Caco-2 (cell line): ENCODE measurements at regions of chr12 and their contacts with region 1.

Region 1: GRCh38 chr12:100229058-100229637 is 28.5 kb downstream of the ACTR6 start:
- DNase-seq: peak; percentile 51 to 63
- H3K4me3 ChIP-seq: no peak overlapping the region
- H3K4me3 Mint-ChIP-seq: no peak overlapping the region
- H3K27ac Mint-ChIP-seq: peak overlapping the region; percentile 79
- H3K4me1 ChIP-seq: peaks cover 11% of the 10 kb centered on the region
- H3K4me1 Mint-ChIP-seq: peaks cover 16% of the 10 kb centered on the region
- H3K27me3 ChIP-seq: no peaks in the 10 kb centered on the region
- H3K27me3 Mint-ChIP-seq: no peaks in the 10 kb centered on the region
- CTCF ChIP-seq: peak in 1 of 2 experiments; percentile 42

Region 2: DNA sequence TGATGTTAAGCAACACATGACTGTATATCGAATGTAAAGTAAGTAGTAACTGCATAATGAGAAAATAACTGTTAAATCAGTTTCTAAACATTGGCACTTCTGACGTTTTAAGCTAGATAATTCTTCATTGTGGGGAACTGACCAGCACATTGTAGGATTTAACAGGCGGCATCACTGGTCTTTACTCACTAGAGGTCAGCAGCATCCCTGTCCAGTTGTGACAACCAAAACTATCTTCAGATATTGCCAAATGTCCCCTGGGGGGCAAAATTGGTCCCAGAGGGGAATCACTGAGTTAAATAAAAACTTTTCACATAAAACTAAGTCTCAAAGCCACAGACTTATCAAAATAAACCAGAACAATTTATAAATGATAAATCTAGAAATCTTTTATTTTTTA is 151.8 kb before region 1 on chr12:
- CTCF ChIA-PET with region 1: interaction called, 5 read pairs
- POLR2A ChIA-PET with region 1: no interaction called
- intact Hi-C with region 1: loop called (anchors 1 kb)
- DNase-seq: peak in 1 of 2 experiments; percentile 11
- H3K4me3 ChIP-seq: no peak overlapping the region
- H3K4me3 Mint-ChIP-seq: no peak overlapping the region
- H3K27ac Mint-ChIP-seq: no peak overlapping the region
- H3K4me1 ChIP-seq: no peaks in the 10 kb centered on the region
- H3K4me1 Mint-ChIP-seq: no peaks in the 10 kb centered on the region
- H3K27me3 ChIP-seq: no peaks in the 10 kb centered on the region
- H3K27me3 Mint-ChIP-seq: no peaks in the 10 kb centered on the region
- CTCF ChIP-seq: peak in 1 of 2 experiments; percentile 19

Region 3: GRCh38 chr12:100142851-100143559 is 86.1 kb before region 1 on chr12 and contains the start of gene BLTP3B:
- CTCF ChIA-PET with region 1: interaction called, 10 read pairs
- POLR2A ChIA-PET with region 1: no interaction called
- intact Hi-C with region 1: loop called (anchors 1 kb)
- DNase-seq: peak; percentile 87 to 89
- H3K4me3 ChIP-seq: peak within 1 kb of the TSS; percentile 99
- H3K4me3 Mint-ChIP-seq: peak within 1 kb of the TSS; percentile 72
- H3K27ac Mint-ChIP-seq: peak within 1 kb of the TSS; percentile 86
- H3K4me1 ChIP-seq: no peaks in the 10 kb centered on the region
- H3K4me1 Mint-ChIP-seq: peaks cover 23% of the 10 kb centered on the region
- H3K27me3 ChIP-seq: no peaks in the 10 kb centered on the region
- H3K27me3 Mint-ChIP-seq: no peaks in the 10 kb centered on the region
- CTCF ChIP-seq: no peak
- total RNA-seq, gene BLTP3B: 26.6 and 29.6 TPM in 2 replicates

Region 4: DNA sequence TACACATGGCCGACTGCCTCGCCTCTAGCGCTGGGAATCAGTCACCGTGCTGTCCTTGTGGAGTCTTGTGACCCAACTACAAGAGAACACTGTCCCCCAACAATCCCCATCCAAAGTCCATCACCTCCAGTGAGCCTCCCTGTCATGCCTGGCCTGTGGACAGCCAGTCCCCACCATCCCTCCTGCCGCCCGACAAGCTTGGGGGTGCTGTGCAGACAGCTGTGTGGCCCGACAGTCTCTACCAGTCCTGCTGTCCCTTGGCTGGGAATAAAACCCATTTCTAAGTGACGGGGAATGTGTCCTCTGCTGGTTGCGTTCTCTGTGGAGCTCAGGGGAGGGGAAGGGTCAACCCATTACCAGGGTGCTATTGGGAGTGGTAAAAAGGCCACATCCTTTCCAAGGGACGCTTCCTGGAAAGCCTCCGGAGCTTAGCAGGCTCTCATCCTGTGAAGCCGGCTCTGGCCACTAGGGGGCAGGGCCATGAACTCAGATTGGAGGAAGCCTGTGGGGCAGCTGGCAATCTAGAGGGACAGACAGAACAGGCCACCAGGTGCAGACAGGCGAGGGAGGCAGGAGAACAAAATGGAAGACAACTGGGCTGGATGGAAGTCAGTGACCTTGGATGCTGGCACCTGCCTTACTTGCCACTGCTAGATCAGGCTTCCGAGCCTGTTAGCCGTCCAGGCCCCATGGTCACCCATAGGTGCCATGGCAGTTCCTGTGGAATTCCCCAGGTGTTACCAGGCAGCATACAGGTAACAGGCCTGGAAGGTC is 74.5 kb before region 1 on chr12:
- CTCF ChIA-PET with region 1: interaction called, 14 read pairs
- POLR2A ChIA-PET with region 1: no interaction called
- intact Hi-C with region 1: loop called (anchors 1 kb)
- DNase-seq: peak; percentile 70 to 75
- H3K4me3 ChIP-seq: no peak overlapping the region
- H3K4me3 Mint-ChIP-seq: no peak overlapping the region
- H3K27ac Mint-ChIP-seq: peak overlapping the region; percentile 53
- H3K4me1 ChIP-seq: no peaks in the 10 kb centered on the region
- H3K4me1 Mint-ChIP-seq: peaks cover 6% of the 10 kb centered on the region
- H3K27me3 ChIP-seq: no peaks in the 10 kb centered on the region
- H3K27me3 Mint-ChIP-seq: no peaks in the 10 kb centered on the region
- CTCF ChIP-seq: peak; percentile 66 to 74

Region 5: DNA sequence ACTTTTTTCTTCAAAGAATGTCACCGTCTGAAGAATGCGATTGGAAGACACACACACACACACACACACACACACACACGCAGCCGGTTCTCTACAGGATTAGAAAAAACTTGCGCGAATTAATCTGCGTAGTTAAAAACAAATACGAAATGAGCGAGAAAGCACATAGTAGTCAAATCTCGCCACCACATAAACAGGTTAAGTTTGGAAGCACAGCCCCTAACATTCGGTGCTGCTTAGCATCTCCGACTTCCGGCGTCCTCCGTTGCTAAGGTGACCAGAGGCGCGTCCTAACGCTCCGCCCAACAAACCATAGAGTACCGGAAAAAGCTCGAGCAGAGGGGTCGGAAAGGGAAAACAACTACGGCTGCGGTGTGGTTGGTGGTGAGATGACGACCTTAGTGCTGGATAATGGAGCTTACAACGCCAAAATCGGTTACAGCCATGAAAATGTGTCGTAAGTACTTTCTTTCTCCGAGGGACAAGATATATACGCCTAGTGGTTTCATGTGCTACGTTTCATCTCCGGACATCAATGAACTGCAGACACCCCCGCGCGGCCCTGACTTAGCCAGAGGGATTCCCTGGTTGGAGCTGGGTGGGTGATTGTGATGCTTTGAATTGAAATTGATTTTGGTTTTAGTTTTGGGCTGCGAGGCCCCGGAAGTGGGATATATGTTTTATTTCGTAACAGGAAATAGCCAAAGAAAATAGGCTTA is 28.5 kb before region 1 on chr12 and contains the start of gene ACTR6:
- CTCF ChIA-PET with region 1: interaction called, 6 read pairs
- POLR2A ChIA-PET with region 1: interaction called, 4 read pairs
- intact Hi-C with region 1: loop called (anchors 1 kb)
- DNase-seq: peak; percentile 94
- H3K4me3 ChIP-seq: peak within 1 kb of the TSS; percentile 65
- H3K4me3 Mint-ChIP-seq: peak within 1 kb of the TSS; percentile 88
- H3K27ac Mint-ChIP-seq: peak within 1 kb of the TSS; percentile 48
- H3K4me1 ChIP-seq: peaks cover 7% of the 10 kb centered on the region
- H3K4me1 Mint-ChIP-seq: no peaks in the 10 kb centered on the region
- H3K27me3 ChIP-seq: no peaks in the 10 kb centered on the region
- H3K27me3 Mint-ChIP-seq: no peaks in the 10 kb centered on the region
- CTCF ChIP-seq: no peak
- total RNA-seq, gene ACTR6: 25.0 and 26.0 TPM in 2 replicates

Region 6: GRCh38 chr12:100215209-100215608 is 13.9 kb before region 1 on chr12:
- CTCF ChIA-PET with region 1: interaction called, 3 read pairs
- POLR2A ChIA-PET with region 1: no interaction called
- intact Hi-C with region 1: loop called (anchors 1 kb)
- DNase-seq: no peak
- H3K4me3 ChIP-seq: no peak overlapping the region
- H3K4me3 Mint-ChIP-seq: peak overlapping the region; percentile 16
- H3K27ac Mint-ChIP-seq: peak overlapping the region; percentile 61
- H3K4me1 ChIP-seq: peaks cover 60% of the 10 kb centered on the region
- H3K4me1 Mint-ChIP-seq: peaks cover 24% of the 10 kb centered on the region
- H3K27me3 ChIP-seq: no peaks in the 10 kb centered on the region
- H3K27me3 Mint-ChIP-seq: no peaks in the 10 kb centered on the region
- CTCF ChIP-seq: no peak

Region 7: DNA sequence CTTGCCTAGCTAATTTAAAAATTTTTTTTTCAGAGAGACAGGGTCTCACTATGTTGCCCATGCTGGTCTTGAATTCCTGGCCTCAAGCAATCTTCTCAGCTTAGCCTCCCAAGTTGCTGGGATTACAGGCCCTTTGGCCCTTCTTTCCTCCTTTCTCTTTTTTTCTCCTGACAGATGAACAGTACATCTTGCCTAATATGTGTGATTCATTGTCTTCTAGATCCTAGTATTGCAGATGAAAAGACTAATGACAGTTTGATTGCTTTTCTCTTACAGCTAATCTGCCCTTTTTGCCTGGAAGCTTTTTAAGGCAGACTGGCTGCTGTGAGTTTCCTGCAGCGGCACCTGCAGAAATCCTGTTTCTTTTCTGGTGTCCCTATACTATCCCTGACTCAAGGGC is 25.7 kb after region 1 on chr12:
- CTCF ChIA-PET with region 1: no interaction called
- POLR2A ChIA-PET with region 1: no interaction called
- intact Hi-C with region 1: no loop called
- DNase-seq: no peak
- H3K4me3 ChIP-seq: no peak overlapping the region
- H3K4me3 Mint-ChIP-seq: no peak overlapping the region
- H3K27ac Mint-ChIP-seq: peak overlapping the region; percentile 4
- H3K4me1 ChIP-seq: peaks cover 19% of the 10 kb centered on the region
- H3K4me1 Mint-ChIP-seq: peaks cover 18% of the 10 kb centered on the region
- H3K27me3 ChIP-seq: no peaks in the 10 kb centered on the region
- H3K27me3 Mint-ChIP-seq: no peaks in the 10 kb centered on the region
- CTCF ChIP-seq: no peak

Region 8: DNA sequence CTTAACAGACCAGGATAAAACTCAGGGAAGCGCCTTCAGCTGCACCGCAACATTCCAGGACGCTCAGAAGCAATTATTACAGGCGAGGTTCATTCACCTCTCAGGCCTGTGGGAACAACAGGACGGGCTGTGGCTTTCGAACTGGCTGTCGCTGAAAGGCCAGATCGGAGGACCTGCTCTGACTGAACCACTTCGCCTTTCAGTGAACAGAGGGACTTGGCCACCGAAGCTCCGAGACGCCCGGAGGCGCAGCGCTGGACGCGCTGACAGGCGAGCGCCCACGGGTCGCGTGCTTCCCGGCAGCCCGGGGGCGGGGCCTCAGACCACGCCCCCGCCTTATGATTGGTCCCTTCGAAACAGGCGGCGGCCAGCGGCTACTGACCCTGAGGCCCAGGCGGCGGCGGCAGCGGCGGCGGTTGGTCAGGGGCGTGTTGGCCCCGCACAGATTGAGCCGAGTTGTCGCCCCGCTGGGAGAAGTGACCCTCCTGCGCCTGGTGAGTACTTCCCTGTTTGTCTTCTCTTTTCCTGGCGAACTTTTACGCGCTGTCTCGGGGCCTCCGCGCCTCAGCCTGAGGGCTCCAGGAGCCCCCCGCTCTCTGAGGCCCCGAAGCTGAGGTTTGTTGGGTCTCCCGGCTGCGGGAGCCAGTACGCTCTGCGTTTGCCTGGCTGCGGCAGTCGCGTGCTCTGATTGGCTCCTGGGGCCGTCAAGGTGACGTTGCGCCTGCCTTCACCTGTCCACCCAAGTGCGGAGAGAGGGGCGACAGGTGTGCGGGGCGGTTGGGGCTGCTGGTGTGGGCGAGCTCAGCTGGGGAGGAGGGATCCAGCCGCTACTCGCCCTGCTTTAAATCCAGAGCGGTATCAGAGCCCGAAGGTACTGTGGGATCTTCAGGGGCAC is 344.4 kb after region 1 on chr12 and contains the start of gene GAS2L3:
- CTCF ChIA-PET with region 1: no interaction called
- POLR2A ChIA-PET with region 1: no interaction called
- intact Hi-C with region 1: no loop called
- DNase-seq: peak; percentile 92 to 94
- H3K4me3 ChIP-seq: peak within 1 kb of the TSS; percentile 73
- H3K4me3 Mint-ChIP-seq: peak within 1 kb of the TSS; percentile 93
- H3K27ac Mint-ChIP-seq: peak within 1 kb of the TSS; percentile 97
- H3K4me1 ChIP-seq: no peaks in the 10 kb centered on the region
- H3K4me1 Mint-ChIP-seq: peaks cover 5% of the 10 kb centered on the region
- H3K27me3 ChIP-seq: no peaks in the 10 kb centered on the region; the same call in 1 of the 2 replicates
- H3K27me3 Mint-ChIP-seq: peaks cover 3% of the 10 kb centered on the region
- CTCF ChIP-seq: no peak
- total RNA-seq, gene GAS2L3: 25.0 and 27.2 TPM in 2 replicates